Testis (tissue), 5 donors: ENCODE measurements at regions of chr7 and their contacts with region 1.

Region 1: DNA sequence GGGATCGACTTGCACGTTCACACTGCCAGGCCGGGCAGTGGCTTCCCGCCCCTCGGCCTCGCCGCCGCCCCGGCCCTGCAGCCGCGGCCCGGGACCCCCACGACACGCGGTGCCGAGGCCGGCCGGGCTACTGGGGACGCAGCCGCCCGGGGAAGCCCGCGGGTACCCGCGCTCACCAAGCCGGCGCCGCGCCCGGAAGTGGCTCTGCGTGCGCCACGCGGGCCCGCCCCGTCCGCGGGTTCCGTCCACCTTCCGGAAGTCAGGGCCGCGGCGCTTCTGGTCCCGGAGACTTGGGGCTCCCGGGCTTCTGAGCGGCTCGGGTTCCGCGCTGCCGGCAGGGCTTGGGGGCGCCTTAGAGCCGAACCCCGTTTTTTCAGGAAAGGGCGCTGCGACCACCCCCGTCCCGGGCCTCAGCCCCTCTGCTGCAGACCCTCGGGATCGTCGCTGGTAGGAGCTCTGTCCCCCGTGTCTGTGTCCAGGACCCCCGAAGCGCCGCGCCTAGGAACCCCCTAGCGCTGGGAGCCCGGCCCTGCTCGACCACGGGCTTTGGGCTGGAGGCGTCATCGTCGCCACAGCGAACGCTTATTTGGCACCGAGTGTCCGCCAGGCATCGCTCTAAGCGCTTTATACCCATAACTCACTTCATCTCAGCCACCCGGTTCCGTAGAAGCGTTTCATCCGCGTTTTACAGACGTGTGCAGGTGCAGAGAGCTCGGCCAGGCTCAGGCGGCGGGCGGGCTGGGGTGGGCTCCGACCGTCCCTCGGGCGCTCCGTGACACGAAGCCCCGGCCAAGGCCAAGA is at the start of gene PSMG3:
- DNase-seq: peak; percentile 94
- H3K4me3 ChIP-seq: peak within 1 kb of the TSS; percentile 96 to 98
- H3K27ac ChIP-seq: peak within 1 kb of the TSS; percentile 96 to 97
- H3K4me1 ChIP-seq: peaks cover 22% of the 10 kb centered on the region
- H3K27me3 ChIP-seq: no peaks in the 10 kb centered on the region
- CTCF ChIP-seq: peak in 2 of 3 experiments; percentile 32 to 37
- POLR2A ChIP-seq: peak; percentile 66
- total RNA-seq, gene PSMG3: 39.1 to 44.5 TPM

Region 2: DNA sequence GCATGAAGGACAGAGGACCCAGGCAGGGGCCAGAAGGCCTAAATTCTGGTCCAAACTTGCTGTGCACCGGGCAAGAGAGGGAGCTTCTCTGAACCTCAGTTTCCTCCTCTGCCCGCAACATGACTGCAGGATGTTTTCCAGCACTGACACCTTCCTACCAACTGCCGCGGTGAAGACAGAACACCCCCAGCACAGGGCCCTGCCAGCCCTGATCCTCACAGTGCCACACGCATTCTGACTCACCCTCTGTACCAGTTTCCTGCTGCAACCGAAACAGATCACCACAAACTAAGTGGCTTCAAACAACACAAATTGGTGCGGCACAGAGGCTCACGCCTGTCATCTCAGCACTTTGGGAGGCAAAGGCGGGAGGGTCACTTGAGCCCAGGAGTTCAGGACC is 644.6 kb after region 1 on chr7:
- intact Hi-C with region 1: loop called (anchors 10 kb)
- DNase-seq: no peak
- H3K4me3 ChIP-seq: no peak overlapping the region
- H3K27ac ChIP-seq: no peak overlapping the region
- H3K4me1 ChIP-seq: no peaks in the 10 kb centered on the region
- H3K27me3 ChIP-seq: no peaks in the 10 kb centered on the region
- CTCF ChIP-seq: no peak
- POLR2A ChIP-seq: no peak